ENCODE measurements at regions of chr12 and their contacts with region 1.

Region 1: GRCh38 chr12:56117778-56118687 is at the start of gene ZC3H10:
- DNase-seq: peak; percentile 98
- H3K4me3 ChIP-seq: peak within 1 kb of the TSS; percentile 83
- CTCF ChIP-seq: peak; percentile 60

Region 2: DNA sequence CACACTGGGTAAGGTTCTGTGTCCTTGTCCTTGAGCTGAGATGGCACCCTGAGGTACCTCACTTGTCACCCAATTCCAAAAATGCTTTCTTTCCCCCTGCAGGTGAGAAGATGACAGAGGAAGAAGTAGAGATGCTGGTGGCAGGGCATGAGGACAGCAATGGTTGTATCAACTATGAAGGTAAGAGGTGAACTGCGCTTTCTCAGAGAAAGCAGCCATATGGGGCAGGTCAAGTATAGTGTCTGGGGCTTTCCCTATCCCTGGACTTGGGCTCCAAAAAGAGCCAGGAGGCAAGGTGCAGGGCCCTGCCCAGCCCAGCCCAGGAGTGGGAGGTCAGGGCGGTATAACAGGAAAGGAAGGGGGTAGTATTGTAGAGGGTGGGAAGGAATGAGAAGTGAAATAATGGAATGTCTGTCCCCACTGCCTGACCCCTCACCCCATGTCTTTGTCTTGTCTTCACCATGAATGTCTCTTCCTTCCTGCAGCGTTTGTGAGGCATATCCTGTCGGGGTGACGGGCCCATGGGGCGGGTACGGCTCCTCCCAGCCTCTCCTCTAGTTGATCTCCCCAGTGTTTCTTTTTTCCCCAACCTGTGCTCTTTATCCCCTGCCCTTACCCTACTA is 42.2 kb after region 1 on chr12:
- in situ Hi-C with region 1: no loop called
- DNase-seq: no peak
- H3K4me3 ChIP-seq: peak overlapping the region; percentile 90
- CTCF ChIP-seq: no peak

Region 3: DNA sequence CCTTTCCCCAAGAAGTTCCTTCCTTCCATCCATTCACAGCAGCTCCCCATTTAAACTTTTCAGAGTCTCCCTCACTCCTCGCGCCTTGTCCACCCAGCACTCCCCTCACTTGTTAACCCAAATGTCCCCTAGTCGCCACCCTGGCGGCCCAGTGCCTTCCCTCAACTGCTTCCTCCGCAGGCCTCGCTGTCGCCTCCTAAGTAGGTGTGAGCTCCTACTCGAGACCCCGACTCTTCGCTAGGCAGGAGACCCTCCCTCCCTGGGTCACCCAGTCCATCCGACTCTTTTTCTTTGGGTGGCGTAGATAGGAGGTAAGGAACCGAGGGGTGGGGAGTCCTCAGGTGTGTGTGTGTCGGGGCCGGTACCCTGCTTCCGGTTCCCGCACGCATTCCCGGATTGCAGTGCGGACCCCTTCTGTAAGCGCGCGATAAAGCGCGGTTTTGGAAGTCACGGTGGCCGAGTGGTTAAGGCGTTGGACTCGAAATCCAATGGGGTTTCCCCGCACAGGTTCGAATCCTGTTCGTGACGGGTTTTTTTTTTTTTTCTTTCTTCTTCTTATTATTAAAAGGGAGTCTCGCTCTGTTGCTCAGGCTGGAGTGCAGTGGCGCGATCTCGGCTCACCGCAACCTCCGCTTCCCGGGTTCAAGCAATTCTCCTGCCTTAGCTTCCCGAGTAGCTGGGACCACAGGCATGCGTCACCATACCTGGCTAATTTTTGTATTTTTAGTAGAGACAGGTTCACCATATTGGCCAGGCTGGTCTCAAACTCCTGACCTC is 72.1 kb after region 1 on chr12:
- in situ Hi-C with region 1: loop called (anchors 5 kb)
- DNase-seq: peak; percentile 59
- H3K4me3 ChIP-seq: peak overlapping the region; percentile 81
- CTCF ChIP-seq: no peak

Region 4: DNA sequence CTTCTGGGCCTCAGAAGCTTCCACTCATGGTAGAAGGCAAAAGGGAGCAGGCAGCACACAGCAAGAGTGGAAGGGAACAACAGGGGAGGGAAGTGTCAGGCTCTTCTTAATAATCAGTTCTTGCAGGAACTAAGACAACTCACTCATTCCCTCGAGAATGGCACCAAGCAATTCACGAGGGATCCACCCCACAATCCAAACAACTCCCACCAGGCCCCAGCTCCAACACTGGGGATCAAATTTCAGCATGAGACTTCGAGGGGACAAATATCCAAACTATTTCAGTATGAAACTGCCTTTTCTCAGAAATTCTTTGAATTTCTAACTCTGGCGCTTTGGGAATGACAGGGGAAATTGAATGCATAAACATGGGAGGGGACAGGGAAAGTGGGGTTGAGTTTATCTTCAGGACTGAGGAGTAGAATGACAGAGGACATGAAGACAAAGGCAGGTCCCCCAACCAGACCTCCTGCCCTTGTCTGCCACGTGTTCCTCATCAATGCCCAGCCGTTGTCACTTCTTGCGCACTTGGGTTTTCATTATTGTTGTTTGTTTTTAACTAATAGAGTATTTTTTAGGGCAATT is 269.2 kb after region 1 on chr12:
- in situ Hi-C with region 1: no loop called
- DNase-seq: no peak
- H3K4me3 ChIP-seq: no peak overlapping the region
- CTCF ChIP-seq: no peak

Measured in astrocyte of the cerebellum (primary cell).